OCI-LY7 (cell line): ENCODE measurements at regions of chr1 and their contacts with region 1.

Region 1: GRCh38 chr1:26864610-26865527 is 1.9 kb downstream of the SFN start:
- DNase-seq: peak; percentile 98
- H3K4me3 ChIP-seq: peak overlapping the region; percentile 82
- H3K27ac ChIP-seq: peak overlapping the region; percentile 97
- H3K4me1 ChIP-seq: peaks cover 40% of the 10 kb centered on the region
- CTCF ChIP-seq: no peak

Region 2: DNA sequence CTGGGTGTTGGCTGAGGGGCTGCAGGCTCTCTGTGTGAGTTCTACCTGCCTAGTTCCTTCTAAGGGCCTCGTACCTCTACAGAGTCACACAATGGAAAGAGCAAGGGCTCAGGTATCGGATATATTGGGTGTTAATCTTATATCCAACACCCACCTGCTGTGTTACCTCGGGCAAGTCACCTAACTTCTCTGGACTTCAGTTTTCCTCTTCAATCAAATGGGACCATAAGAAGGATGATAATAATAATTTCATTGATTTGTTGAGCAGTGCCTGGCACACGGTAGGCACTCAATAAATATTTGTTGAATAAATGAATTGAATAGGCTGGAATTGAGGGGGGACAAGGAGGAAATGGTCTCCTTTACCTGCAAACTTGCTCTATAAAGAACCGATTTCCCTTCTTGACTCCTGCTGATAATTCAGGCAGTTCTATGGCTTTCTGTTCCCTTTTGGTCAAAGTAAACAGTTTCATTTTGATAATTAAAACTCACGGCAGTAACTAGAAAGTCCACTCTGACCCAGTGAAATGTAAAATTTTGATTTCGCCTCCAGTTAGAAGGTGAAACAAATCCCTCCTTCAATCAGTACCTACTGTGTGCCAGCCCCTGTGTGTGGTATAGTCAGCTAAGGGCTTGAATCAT is 1264.8 kb before region 1 on chr1:
- CTCF ChIA-PET with region 1: no interaction called
- POLR2A ChIA-PET with region 1: no interaction called
- intact Hi-C with region 1: no loop called
- DNase-seq: no peak
- H3K4me3 ChIP-seq: peak overlapping the region; percentile 23
- H3K27ac ChIP-seq: no peak overlapping the region
- H3K4me1 ChIP-seq: peaks cover 39% of the 10 kb centered on the region
- CTCF ChIP-seq: no peak

Region 3: DNA sequence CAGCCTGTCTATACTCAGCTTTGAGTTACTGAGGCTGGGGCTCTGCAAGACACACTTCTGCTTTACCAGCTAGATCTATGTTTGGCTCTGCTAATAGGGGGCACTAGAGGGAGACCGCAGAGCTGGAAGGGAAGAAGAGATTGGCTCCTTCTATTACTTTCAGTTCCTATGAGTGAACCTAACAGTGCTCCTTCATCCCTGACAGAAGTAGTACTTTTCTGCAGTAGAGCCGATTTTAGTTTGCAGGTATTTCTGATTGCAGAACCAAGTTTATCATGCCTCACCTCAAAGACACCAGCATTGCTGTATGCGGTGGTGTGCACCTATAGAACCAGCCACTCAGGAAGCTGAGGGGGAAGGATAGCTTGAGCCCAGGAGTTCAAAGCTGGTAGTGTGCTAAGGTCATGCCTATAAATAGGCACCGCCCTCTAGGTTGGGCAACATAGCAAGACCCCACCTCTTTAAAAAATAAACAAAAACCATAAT is 44.0 kb before region 1 on chr1:
- CTCF ChIA-PET with region 1: no interaction called
- POLR2A ChIA-PET with region 1: interaction called, 19 read pairs
- intact Hi-C with region 1: no loop called
- DNase-seq: peak; percentile 89
- H3K4me3 ChIP-seq: peak overlapping the region; percentile 20
- H3K27ac ChIP-seq: peak overlapping the region; percentile 83
- H3K4me1 ChIP-seq: peaks cover 31% of the 10 kb centered on the region
- CTCF ChIP-seq: peak; percentile 82

Region 4: GRCh38 chr1:26833432-26834405 is 31.1 kb before region 1 on chr1:
- CTCF ChIA-PET with region 1: no interaction called
- POLR2A ChIA-PET with region 1: interaction called, 11 read pairs
- intact Hi-C with region 1: no loop called
- DNase-seq: peak; percentile 85
- H3K4me3 ChIP-seq: no peak overlapping the region
- H3K27ac ChIP-seq: peak overlapping the region; percentile 57
- H3K4me1 ChIP-seq: peaks cover 23% of the 10 kb centered on the region
- CTCF ChIP-seq: peak; percentile 52

Region 5: GRCh38 chr1:26853156-26853555 is 11.7 kb before region 1 on chr1:
- CTCF ChIA-PET with region 1: no interaction called
- POLR2A ChIA-PET with region 1: interaction called, 15 read pairs
- intact Hi-C with region 1: no loop called
- DNase-seq: peak; percentile 80
- H3K4me3 ChIP-seq: no peak overlapping the region
- H3K27ac ChIP-seq: no peak overlapping the region
- H3K4me1 ChIP-seq: no peaks in the 10 kb centered on the region
- CTCF ChIP-seq: peak; percentile 93

Region 6: DNA sequence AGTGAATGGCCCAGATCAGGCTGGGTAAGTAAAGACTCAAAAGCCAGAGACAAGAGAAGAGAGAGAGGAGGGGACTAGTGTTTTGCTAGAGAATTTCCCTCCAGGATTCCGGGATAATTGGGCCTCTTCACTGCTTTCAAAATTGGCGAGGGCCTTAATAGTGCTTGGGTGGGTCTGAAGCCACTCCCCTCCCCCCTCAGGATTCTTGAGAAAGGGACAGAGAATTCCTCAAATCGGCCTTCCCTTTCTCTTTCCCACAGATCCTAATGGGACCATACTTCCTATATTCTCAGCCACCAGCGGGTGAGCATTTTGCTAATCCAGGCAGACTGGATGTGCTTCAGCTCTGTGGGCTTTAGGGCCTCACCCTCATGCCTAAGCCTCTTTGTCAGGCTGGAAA is 10.0 kb after region 1 on chr1:
- CTCF ChIA-PET with region 1: no interaction called
- POLR2A ChIA-PET with region 1: interaction called, 4 read pairs
- intact Hi-C with region 1: loop called (anchors 1 kb)
- DNase-seq: no peak
- H3K4me3 ChIP-seq: no peak overlapping the region
- H3K27ac ChIP-seq: no peak overlapping the region
- H3K4me1 ChIP-seq: peaks cover 10% of the 10 kb centered on the region
- CTCF ChIP-seq: no peak

Region 7: DNA sequence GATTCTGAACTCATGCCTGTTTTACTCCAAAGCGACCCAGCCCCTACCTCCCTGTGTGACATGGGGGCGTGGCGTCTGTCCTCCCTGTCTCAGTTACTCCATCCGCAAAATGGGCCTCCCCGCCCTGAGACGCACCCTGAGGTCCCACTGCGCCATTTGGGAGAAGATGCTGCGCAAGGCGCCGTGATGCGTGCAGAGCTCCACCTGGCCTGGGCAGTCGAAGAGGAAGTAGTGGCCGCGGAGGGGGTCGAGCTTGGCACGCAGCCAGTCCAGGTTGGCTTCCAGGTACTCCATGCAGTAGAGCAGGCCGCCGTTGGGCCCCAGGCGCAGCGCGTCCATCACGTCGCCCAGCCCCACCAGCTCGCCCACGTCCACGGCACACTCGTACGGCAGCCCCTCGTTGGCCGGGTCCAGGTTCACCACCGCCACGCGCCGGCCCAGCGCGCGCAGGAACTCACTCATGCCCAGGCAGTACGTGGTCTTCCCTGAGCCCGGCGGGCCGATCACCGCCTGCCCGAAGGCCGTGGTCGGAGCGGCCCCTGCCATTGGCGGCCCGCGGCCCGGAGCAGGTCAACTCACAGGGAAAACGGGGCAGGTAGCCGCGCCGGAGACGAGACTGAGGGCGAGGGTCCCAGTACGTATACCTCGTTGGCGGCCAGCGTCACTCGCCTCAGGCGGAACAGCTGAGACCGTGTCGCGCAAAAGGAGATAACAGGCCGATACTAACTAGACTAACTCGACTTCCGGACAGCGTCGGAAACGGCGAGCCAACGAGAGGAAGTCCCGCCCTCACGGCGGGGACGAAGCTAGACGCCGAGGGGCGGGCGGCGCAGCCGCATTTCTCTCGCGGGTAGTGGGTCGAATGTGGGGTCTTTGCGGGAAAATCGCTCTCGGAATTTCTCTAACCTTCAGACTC is 24.9 kb after region 1 on chr1 and contains the start of gene GPN2:
- CTCF ChIA-PET with region 1: no interaction called
- POLR2A ChIA-PET with region 1: interaction called, 12 read pairs
- intact Hi-C with region 1: no loop called
- DNase-seq: peak; percentile 87
- H3K4me3 ChIP-seq: peak within 1 kb of the TSS; percentile 93
- H3K27ac ChIP-seq: peak within 1 kb of the TSS; percentile 62
- H3K4me1 ChIP-seq: peaks cover 14% of the 10 kb centered on the region
- CTCF ChIP-seq: no peak
- total RNA-seq, gene GPN2: 17.5 and 18.1 TPM in 2 replicates